ENCODE measurements at regions of chr2 and their contacts with region 1.

Region 1: GRCh38 chr2:194661431-194661830 is 995.6 kb upstream of the SLC39A10 start:
- DNase-seq: no peak

Region 2: GRCh38 chr2:194686569-194686968 is 25.1 kb after region 1 on chr2:
- intact Hi-C with region 1: loop called in 1 of 2 experiments (anchors 1 kb)
- DNase-seq: no peak

Region 3: GRCh38 chr2:194938066-194938465 is 276.6 kb after region 1 on chr2:
- intact Hi-C with region 1: no loop called
- DNase-seq: no peak